Pancreas (tissue), 10 donors: ENCODE measurements at regions of chr20 and their contacts with region 1.

Region 1: GRCh38 chr20:561437-562231 is 18.0 kb upstream of the CSNK2A1 start:
- DNase-seq: peak in 3 of 6 donors; percentile 36 to 66 (median 38)
- ATAC-seq: peak; percentile 75 to 92 (median 90)
- H3K4me3 ChIP-seq: no peak overlapping the region
- H3K27ac ChIP-seq: no peak overlapping the region
- H3K4me1 ChIP-seq: no peaks in the 10 kb centered on the region
- H3K27me3 ChIP-seq: no peaks in the 10 kb centered on the region
- CTCF ChIP-seq: peak; percentile 86 to 92 (median 87)

Region 2: GRCh38 chr20:324177-325044 is 237.2 kb before region 1 on chr20:
- intact Hi-C with region 1: no loop called
- DNase-seq: peak; percentile 90 to 97 (median 96)
- ATAC-seq: peak; percentile 77 to 86 (median 80)
- H3K4me3 ChIP-seq: peak overlapping the region; percentile 51 to 74 (median 70)
- H3K27ac ChIP-seq: peak overlapping the region; percentile 85 to 96 (median 90)
- H3K4me1 ChIP-seq: peaks cover 0 to 6% (median 6%) of the 10 kb centered on the region in 3 donors
- H3K27me3 ChIP-seq: no peaks in the 10 kb centered on the region
- CTCF ChIP-seq: peak in 1 of 4 donors; percentile 12

Region 3: DNA sequence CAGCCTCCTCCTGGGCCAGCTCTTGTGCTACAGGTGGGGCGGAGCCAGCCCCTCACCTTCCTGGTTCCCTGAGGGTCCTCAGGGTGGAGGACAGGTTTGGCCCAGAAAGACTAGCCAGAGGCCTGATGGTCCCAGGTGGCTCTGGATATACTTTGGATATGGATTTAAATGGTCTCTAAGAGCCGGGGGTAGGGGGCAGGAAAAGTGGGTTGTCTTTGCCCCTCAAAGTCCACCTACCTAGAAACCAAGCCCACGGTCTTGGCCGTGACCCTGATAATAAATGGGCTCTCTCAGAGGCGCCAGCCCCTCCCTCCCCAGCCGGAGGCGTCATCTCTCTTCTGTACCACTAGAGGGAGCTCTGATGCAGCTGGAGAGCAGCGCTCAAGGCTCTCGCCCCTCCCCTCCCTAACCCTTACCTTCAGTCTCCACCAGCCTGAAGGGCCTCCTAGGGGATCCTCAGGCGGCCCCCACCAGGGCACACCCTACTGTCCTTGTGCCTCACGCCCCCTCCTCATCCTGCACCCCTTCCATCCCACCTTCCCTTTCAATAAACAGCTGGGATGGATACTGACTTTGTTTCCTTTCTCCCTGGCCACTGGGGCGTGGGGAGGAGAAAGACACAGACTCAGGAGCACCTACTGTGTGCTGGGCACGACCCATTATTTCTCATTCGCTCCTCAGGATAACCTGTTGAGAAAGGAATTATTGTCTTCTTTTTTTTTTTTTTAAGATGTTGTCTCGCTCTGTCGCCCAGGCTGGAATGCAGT is 207.2 kb before region 1 on chr20:
- intact Hi-C with region 1: no loop called
- DNase-seq: peak; percentile 61 to 87 (median 80)
- ATAC-seq: peak; percentile 92 to 100 (median 98)
- H3K4me3 ChIP-seq: no peak overlapping the region
- H3K27ac ChIP-seq: no peak overlapping the region
- H3K4me1 ChIP-seq: peaks cover 0 to under 1% (median 0%) of the 10 kb centered on the region in 3 donors
- H3K27me3 ChIP-seq: no peaks in the 10 kb centered on the region
- CTCF ChIP-seq: peak; percentile 93 to 97 (median 96)

Region 4: DNA sequence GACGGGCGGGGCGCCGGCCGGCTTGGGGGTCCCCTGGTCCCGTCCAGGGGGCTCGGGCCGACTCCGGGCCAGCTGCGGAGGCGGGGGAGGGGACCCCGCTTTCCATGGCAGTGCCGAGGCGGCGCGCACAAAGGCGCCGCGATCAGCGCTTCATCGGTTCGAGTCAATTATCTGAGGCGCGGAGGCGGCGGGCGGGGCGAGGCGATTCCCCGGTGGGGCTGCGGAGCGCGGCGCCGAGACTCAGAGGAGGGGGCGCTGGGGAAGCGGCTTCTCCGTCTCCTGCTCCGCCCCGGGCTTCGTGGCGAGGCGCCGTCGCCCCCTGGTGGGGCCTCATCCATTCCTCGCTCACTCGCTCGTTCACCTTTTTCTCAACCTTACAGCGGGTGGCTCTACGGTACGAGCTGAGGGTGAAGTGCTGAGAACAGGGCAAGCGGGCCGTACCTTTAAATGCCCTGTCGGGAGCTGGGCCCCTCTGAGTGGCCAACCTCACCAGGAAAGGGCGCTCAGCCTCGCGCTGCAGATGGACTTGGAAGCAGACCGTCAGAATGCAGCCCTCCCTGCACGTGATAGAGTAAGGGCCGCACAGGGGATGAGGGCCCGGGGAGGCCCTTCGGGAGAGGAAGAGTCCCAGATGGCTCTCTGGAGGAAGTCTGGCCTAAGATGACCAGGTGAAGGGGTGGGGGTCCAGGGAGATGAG is 166.8 kb after region 1 on chr20:
- intact Hi-C with region 1: loop called in 2 of 3 experiments (anchors 5 to 10 kb)
- DNase-seq: peak; percentile 20 to 86 (median 52)
- ATAC-seq: peak; percentile 71 to 97 (median 94)
- H3K4me3 ChIP-seq: peak overlapping the region in 3 of 4 donors; percentile 10 to 58 (median 39)
- H3K27ac ChIP-seq: no peak overlapping the region
- H3K4me1 ChIP-seq: no peaks in the 10 kb centered on the region
- H3K27me3 ChIP-seq: peaks cover 0 to 8% (median 0%) of the 10 kb centered on the region in 4 donors
- CTCF ChIP-seq: peak; percentile 12 to 48 (median 40)

Region 5: GRCh38 chr20:750801-751200 is 189.2 kb after region 1 on chr20:
- intact Hi-C with region 1: no loop called
- DNase-seq: no peak
- ATAC-seq: no peak
- H3K4me3 ChIP-seq: no peak overlapping the region
- H3K27ac ChIP-seq: no peak overlapping the region
- H3K4me1 ChIP-seq: no peaks in the 10 kb centered on the region
- H3K27me3 ChIP-seq: no peaks in the 10 kb centered on the region
- CTCF ChIP-seq: no peak